Psoas muscle (tissue), 8 donors: ENCODE measurements at regions of chr9 and their contacts with region 1.

Region 1: GRCh38 chr9:121213136-121213806 is 11.6 kb upstream of the RAB14 start:
- DNase-seq: peak; percentile 90 to 94
- ATAC-seq: peak; percentile 96 to 99 (median 98)
- H3K4me3 ChIP-seq: no peak overlapping the region
- H3K27ac ChIP-seq: no peak overlapping the region
- H3K4me1 ChIP-seq: no peaks in the 10 kb centered on the region
- H3K27me3 ChIP-seq: no peaks in the 10 kb centered on the region
- CTCF ChIP-seq: peak; percentile 94

Region 2: DNA sequence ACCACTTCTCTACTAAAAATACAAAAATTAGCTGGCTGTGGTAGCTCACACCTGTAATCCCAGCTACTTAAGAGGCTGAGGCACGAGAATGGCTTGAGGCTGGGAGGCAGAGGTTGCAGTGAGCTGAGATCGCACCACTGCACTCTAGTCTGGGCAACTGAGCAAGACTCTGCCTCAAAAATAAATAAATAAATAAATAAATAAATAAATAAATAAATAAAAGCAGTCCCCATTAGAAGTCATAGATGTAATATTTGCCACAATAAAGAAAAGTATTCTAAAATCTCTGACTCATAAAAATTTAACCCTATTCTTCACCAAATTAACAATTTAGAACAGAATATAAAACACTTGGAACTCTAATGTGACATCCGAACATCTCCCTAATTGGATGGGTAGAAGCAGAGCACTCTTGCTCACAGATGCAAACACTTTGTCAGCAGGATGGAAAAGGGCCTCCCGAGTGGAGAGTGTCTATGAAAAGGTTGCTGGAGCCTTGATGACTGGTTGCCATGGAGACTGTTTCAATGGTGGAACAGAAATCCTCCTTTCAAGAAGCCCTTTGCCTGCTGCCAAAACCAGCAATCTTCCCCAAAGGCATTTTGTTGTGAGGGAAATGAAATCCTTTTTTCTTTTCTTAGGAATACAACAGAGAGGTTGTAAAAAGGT is 247.8 kb before region 1 on chr9:
- intact Hi-C with region 1: no loop called
- DNase-seq: peak in 1 of 2 donors; percentile 16
- ATAC-seq: peak in 1 of 4 donors; percentile 49
- H3K4me3 ChIP-seq: no peak overlapping the region
- H3K27ac ChIP-seq: no peak overlapping the region
- H3K4me1 ChIP-seq: no peaks in the 10 kb centered on the region
- H3K27me3 ChIP-seq: no peaks in the 10 kb centered on the region
- CTCF ChIP-seq: no peak

Region 3: DNA sequence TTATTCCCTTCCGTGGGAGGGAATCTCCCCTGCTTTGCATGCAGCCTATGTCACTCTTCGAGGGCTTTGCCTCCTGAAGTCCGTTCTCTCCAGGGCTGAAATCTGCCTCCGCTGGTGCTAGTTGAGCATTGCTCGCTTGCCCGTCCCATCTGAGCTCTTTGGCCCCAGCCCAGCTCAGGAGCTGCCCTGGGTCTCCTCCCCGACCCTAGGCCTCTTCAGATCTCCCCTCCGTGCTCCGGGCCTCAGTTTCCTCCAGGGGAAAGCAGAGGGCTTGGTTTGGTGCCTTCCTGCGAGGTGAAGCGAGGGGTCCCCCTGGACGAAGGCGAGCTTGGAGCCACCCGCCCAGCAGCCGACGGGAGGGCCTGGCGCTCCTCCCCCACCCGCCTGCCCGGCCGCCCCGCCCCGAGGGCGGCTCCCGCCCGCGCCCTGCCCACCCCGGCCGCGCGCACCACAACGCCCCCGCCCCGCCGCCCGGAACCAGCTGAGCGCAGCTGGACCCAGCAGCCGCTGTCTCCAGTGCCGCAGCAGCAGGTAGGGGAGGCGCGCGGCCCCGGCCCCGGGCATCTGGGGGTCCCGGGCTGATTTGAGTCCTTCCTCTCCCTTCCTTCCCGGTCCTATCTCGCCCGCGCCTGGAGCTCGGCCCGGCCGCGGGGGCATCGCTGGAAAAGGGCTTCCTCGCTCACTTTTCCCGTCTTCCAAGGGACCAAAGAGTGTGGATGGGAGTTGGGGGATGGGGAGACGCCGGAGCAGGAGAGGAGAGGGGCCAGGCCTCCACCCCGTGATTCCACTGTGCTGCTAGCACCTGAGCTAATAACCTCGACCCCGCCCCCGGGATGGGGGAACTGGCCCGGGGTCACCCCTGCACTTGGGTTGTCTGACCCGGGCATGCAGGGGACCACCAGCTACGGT is 54.7 kb after region 1 on chr9 and contains the start of gene GSN:
- intact Hi-C with region 1: loop called (anchors 2 to 5 kb)
- DNase-seq: peak; percentile 85 to 89
- ATAC-seq: peak; percentile 81 to 92 (median 87)
- H3K4me3 ChIP-seq: peak within 1 kb of the TSS; percentile 86
- H3K27ac ChIP-seq: peak within 1 kb of the TSS; percentile 73
- H3K4me1 ChIP-seq: peaks cover 48% of the 10 kb centered on the region
- H3K27me3 ChIP-seq: no peaks in the 10 kb centered on the region
- CTCF ChIP-seq: no peak
- total RNA-seq, gene GSN: 140 to 490 (median 211) TPM

Region 4: GRCh38 chr9:121399883-121400607 is 186.8 kb after region 1 on chr9:
- intact Hi-C with region 1: loop called (anchors 1 to 2 kb)
- DNase-seq: no peak
- ATAC-seq: peak; percentile 58 to 85 (median 80)
- H3K4me3 ChIP-seq: no peak overlapping the region
- H3K27ac ChIP-seq: no peak overlapping the region
- H3K4me1 ChIP-seq: peaks cover 4% of the 10 kb centered on the region
- H3K27me3 ChIP-seq: no peaks in the 10 kb centered on the region
- CTCF ChIP-seq: peak; percentile 73

Region 5: GRCh38 chr9:121545875-121546423 is 332.7 kb after region 1 on chr9:
- intact Hi-C with region 1: no loop called
- DNase-seq: peak; percentile 97
- ATAC-seq: peak; percentile 89 to 94 (median 92)
- H3K4me3 ChIP-seq: peak overlapping the region; percentile 52
- H3K27ac ChIP-seq: no peak overlapping the region
- H3K4me1 ChIP-seq: peaks cover 10% of the 10 kb centered on the region
- H3K27me3 ChIP-seq: no peaks in the 10 kb centered on the region
- CTCF ChIP-seq: peak; percentile 97